Gastrocnemius medialis (tissue), 4 donors: ENCODE measurements at regions of chr12 and their contacts with region 1.

Region 1: DNA sequence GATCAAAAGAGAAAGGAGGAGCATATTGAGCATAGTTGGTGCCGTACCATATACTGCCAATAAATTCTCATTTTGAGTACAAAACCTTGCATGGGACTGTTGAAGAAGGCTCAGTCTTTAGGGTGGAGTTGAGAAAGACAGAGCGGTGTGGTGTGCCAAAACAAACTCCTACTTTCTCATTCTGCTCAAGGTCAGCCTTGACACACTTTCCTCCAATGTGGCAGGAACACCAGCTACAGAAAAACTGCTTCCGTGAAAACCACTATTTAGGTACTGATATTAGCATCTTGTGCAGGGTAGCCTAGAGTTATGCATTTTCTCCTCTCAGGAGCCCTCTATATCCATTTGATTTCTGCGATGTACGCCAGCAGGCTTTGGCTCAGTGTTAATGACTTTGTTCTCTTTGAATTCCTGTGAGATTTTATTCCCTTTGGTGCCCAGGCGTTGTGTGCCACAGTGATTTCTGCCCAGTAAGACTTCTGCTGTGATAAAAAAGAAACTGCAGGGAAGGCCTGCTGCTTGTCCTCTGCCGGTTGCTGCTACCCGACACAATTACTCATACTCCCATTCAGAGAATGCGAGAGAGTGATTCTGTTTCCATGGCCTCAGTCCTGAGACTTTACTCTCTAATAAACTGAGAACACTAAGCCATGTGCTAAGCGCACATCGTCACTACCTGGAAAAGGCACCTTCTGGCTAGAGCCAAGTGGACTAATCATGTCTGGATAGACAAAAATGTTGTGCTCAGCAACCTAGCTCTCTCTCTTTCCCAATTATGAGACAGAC is 88.3 kb upstream of the MDM1 start:
- DNase-seq: peak; percentile 31 to 53
- ATAC-seq: peak; percentile 95 to 99
- H3K4me3 ChIP-seq: no peak overlapping the region
- H3K27ac ChIP-seq: peak overlapping the region; percentile 54 to 77 (median 68)
- H3K4me1 ChIP-seq: peaks cover 18 to 19% of the 10 kb centered on the region in 2 donors
- H3K27me3 ChIP-seq: no peaks in the 10 kb centered on the region
- CTCF ChIP-seq: no peak
- POLR2A ChIP-seq: no peak

Region 2: GRCh38 chr12:68349921-68350606 is 70.4 kb before region 1 on chr12:
- in situ Hi-C with region 1: no loop called
- intact Hi-C with region 1: no loop called
- DNase-seq: no peak
- ATAC-seq: peak; percentile 87 to 89
- H3K4me3 ChIP-seq: no peak overlapping the region
- H3K27ac ChIP-seq: peak overlapping the region in 1 of 4 donors; percentile 40
- H3K4me1 ChIP-seq: peaks cover 0 to 3% of the 10 kb centered on the region in 2 donors
- H3K27me3 ChIP-seq: no peaks in the 10 kb centered on the region
- CTCF ChIP-seq: no peak
- POLR2A ChIP-seq: no peak

Region 3: GRCh38 chr12:68364893-68365725 is 55.3 kb before region 1 on chr12:
- in situ Hi-C with region 1: no loop called
- intact Hi-C with region 1: loop called (anchors 5 kb)
- DNase-seq: peak; percentile 72 to 85
- ATAC-seq: peak; percentile 64 to 88
- H3K4me3 ChIP-seq: peak overlapping the region; percentile 33 to 49 (median 40)
- H3K27ac ChIP-seq: peak overlapping the region; percentile 63 to 72 (median 68)
- H3K4me1 ChIP-seq: peaks cover 5 to 14% of the 10 kb centered on the region in 2 donors
- H3K27me3 ChIP-seq: no peaks in the 10 kb centered on the region
- CTCF ChIP-seq: no peak
- POLR2A ChIP-seq: no peak